Posterior cingulate gyrus (tissue), 11 donors: ENCODE measurements at regions of chr10 and their contacts with region 1.

Region 1: DNA sequence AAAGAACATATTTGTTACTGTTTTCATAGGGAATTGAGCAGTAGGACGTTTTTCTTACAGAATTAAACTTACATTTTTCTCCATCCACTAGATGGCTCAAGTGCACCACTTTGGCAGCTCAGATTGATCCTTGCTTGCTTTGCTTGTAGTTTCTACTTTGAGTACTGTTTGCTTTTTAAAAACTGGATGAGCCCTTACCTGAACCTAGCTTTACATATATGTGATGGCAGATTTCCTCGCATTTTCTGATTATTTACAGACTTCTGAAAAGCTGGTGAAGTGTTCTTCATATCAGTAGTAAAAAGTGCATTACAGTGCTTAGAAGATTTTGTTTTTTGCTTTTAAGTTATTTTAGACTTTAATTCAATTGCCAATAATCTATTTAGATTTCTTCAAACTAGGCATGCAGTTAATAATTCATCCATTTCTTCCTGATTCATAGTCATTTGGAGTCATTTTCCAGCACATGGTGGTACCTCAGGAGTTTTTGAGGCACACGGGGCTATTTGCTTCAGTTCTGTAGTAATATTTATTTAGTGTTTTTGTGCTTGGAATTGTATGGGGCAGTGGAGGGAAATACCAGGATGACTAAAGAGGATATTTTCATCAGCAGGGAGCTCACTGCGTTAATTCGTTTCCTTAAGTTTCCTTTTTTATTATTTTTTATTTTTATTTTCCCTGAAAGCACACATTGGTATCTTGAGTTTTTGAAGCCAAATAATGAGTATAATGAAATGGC is 57.3 kb downstream of the MAPK8 start:
- DNase-seq: peak in 6 of 10 donors; percentile 11 to 77 (median 33)

Region 2: DNA sequence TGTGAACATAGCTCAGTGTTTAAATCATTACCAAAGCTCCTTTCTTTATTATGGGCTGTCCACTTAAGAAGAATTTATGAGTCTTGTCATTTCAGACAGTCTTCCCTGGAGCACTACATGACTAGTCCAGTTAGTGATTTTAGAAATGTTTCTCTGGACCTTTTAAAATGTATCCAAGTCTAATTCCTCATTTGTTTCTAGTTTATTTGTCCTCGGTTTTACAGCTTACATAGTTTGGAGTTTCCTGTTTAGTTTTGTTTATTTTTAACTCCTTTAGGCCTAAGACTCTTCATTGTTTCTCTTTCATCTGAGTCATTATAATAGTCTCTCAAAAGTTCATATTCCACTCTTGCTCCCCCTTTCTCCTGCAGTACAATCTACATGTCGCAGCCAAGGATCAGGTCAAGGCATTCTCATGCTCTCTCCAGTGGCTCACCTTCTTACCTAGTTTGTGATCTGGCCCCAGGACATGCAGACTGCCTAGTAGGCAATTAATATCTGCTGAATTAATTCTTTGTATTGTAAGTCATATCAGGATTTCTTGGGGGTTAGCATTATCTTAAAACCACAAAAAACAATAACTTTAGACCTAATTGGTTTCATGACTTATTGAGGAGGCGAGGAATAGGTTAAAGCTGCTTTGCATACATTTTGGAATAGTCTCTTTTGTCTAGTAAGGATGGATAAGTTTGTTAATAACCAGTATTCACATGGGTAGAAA is 36.5 kb after region 1 on chr10:
- intact Hi-C with region 1: no loop called
- DNase-seq: no peak

Region 3: GRCh38 chr10:48506147-48506917 is 142.5 kb after region 1 on chr10:
- intact Hi-C with region 1: loop called (anchors 5 kb)
- DNase-seq: no peak

Region 4: DNA sequence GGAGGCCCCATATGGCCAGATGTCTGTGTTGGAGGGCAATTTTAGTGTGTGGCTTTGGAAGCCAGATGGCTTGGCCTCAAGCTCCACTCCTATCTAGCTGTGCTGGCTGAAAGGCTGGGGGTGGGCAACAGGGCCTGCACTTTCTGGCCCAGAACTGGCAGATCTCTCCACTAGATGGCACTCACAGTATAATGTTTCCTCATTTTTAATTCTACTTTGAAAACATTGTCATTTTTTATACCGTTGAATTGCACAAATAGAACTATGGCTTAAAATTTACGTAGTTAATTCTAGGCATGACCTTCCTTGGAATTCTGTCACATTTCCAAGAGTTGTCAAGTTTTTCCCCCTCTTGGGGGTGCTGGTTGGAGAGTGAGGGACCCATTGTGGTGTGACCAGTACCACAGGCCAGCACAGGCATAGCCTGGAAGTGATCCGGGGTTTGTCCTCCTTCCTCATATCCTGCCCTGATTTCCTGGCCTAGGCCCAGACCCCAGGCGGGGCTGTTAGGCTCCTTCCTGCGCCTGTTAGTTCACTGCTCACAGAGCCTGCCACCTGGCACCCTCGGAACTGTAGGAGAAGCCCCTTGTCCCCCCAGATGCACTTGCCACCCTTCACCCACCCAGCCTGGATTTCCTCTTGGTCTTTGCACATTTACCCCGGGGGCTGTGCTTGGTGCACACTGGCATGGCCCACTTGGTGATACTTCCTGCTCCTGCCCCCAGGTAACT is 188.2 kb after region 1 on chr10:
- intact Hi-C with region 1: loop called (anchors 5 kb)
- DNase-seq: peak in 5 of 10 donors; percentile 32 to 86 (median 43)

Region 5: GRCh38 chr10:48759113-48759901 is 395.5 kb after region 1 on chr10:
- intact Hi-C with region 1: no loop called
- DNase-seq: no peak